ENCODE measurements at regions of chr2 and their contacts with region 1.

Region 1: DNA sequence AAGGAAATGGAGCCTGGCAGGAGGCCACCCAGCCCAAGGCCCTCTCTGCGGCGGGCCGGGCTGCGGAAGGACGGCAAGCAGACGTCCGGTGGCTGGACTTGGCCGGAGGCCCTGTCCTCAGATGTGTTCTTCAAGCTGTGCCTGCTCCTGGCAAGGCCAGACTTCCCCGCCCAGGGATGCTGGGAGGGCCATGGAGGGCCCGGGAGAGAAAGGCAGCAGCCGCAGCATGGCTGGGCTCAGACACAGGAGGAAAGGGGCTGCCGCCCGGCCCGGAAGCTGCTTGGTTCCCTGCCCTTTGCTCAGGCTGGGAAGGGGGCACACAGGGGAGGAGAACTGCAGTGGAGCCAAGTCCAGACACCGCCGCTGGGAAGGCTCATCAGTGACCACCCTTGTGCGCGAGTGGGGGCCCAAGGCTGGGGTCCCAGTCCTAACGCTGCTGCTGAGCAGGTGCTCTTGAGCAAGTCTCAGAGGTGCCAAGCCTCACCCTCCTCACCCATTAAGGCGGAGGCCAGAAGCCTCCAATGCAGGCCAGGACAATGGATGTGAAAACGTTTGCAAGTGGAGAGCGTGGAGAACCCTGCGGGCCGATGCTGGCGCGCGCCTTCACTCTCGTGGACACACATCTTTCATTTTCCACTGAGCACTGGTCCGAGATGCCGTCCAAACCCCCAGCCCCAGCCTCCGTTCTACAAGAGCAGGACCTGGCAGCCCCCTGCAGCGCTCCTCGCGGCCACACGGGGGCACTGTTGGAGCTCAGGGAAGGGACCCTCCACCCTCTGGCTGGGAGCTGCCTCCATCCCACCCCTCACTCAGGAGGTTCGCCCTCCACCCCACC is 7.9 kb downstream of the CROCC2 start:
- DNase-seq: peak; percentile 55
- ATAC-seq: peak; percentile 57
- H3K4me3 ChIP-seq: no peak overlapping the region
- H3K27ac ChIP-seq: peak overlapping the region; percentile 7
- H3K4me1 ChIP-seq: peaks cover 38% of the 10 kb centered on the region
- H3K27me3 ChIP-seq: no peaks in the 10 kb centered on the region
- CTCF ChIP-seq: peak; percentile 79
- POLR2A ChIP-seq: no peak
- RAD21 ChIP-seq: peak; percentile 71

Region 2: DNA sequence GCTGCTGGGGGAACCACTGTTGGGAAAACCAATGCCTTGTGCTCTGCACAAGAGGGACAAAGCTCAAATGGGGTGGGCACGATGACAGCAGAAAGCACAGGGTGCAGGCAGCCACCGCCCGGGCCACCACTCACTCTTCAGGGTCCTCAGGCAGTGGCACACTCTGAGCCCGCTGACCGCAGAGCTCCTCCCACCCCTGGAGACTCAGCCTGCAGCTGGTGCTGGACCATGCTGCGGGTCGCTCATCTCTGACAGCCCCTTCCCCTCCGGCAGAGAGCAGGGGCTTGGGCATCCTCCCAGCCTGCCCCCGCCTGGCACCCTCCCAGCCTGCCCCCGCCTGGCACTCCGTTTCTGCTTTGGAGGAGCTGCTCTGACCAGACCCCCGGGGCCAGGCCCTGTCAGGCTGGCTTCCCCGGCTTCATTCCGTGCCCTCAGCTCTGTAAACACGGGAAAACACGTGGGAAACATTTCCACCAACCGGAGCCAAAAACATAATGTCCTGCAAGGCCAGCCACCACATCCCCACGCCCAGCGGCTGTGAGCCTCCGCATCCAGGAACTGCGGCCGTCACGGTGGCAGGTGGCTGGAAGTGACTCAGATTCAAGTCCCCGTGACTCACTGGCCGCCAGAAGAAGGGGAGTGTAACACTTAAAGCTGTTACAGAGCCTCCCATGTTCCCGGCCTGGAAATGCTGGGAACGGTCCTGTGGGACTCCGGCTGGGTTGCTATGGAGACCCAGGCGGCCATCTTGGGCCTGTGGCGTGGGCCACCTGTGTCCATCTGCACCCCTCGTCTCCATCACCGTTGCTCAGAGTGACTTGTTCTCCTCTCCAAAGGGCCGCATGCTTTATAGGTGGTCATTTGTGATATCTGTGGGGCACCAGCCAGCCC is 77.6 kb after region 1 on chr2:
- CTCF ChIA-PET with region 1: no interaction called
- POLR2A ChIA-PET with region 1: no interaction called
- dilution Hi-C with region 1: no loop called
- in situ Hi-C with region 1: loop called (anchors 5 kb)
- intact Hi-C with region 1: no loop called
- DNase-seq: peak; percentile 97
- ATAC-seq: peak; percentile 79
- H3K4me3 ChIP-seq: no peak overlapping the region
- H3K27ac ChIP-seq: peak overlapping the region; percentile 35
- H3K4me1 ChIP-seq: peaks cover 32% of the 10 kb centered on the region
- H3K27me3 ChIP-seq: no peaks in the 10 kb centered on the region
- CTCF ChIP-seq: no peak
- POLR2A ChIP-seq: no peak
- RAD21 ChIP-seq: no peak

Region 3: DNA sequence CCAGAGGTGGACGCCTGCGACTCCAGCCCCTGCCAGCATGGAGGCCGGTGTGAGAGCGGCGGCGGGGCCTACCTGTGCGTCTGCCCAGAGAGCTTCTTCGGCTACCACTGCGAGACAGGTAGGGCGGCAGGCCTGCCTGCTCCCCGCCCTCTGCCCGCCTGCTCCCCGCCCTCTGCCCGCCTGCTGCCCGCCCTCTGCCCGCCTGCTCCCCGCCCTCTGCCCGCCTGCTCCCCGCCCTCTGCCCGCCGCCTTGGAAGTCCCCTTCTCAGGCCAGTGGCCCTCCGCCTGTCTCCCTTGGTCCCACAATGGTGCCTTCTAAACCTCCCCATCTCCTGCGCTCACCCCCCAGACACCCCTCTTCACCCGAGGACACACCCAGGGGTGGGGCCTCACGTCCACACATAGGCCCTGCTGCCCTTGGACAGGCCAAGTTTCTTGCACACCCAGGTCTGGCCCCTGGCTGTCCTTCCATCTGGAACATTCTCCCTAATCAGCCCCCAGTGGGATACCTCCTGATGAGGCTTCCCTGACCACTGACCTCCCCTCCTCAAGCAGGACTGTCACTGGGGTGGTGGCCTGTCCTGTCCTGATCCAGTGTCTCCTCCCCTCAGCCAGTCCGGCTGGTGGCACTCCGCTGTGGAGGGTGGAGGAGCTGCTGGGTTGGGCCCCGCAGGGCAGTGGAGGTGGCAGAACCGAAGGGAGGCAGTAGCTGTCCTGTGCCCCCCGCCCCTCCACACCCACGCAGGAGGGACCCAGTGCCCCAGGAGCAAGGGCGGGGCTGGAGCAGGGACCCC is 150.2 kb after region 1 on chr2:
- CTCF ChIA-PET with region 1: no interaction called
- POLR2A ChIA-PET with region 1: no interaction called
- dilution Hi-C with region 1: no loop called
- in situ Hi-C with region 1: no loop called
- intact Hi-C with region 1: loop called (anchors 5 kb)
- DNase-seq: no peak
- ATAC-seq: no peak
- H3K4me3 ChIP-seq: no peak overlapping the region
- H3K27ac ChIP-seq: no peak overlapping the region
- H3K4me1 ChIP-seq: no peaks in the 10 kb centered on the region
- H3K27me3 ChIP-seq: no peaks in the 10 kb centered on the region
- CTCF ChIP-seq: no peak
- POLR2A ChIP-seq: no peak
- RAD21 ChIP-seq: no peak

Region 4: DNA sequence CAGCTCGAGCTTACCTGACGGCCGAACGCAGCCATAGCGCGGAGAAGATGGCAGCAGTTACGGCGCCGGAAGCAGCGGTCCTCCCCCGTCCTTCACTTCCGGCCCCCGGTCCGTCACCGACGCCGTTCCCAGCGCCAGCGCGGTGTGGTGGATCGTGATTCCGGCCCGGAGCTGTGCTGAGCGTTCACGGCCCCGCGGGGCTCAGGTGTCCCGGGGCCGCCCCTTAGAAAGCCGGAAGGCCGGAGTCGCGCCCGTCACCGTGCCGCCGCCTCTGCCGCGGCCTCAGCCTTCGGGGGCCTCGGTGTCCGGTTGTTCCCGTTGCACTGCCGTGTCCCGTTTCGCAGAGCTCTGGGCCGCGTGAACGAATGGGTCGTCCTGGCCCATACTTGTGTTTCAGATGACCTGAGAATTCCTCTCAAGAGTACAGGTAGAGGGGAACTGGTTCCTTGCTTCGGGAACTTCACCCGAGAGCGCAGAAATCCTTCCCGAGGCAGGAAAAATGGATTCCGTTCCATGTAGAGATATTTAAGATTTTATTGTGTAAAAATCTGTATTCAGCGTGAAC is 188.3 kb after region 1 on chr2 and contains the start of gene MTERF4:
- CTCF ChIA-PET with region 1: no interaction called
- POLR2A ChIA-PET with region 1: no interaction called
- dilution Hi-C with region 1: no loop called
- in situ Hi-C with region 1: no loop called
- intact Hi-C with region 1: loop called (anchors 1 kb)
- DNase-seq: peak; percentile 76
- ATAC-seq: peak; percentile 98
- H3K4me3 ChIP-seq: peak within 1 kb of the TSS; percentile 87
- H3K27ac ChIP-seq: peak within 1 kb of the TSS; percentile 73
- H3K4me1 ChIP-seq: no peaks in the 10 kb centered on the region; the same call in 1 of the 2 replicates
- H3K27me3 ChIP-seq: no peaks in the 10 kb centered on the region
- CTCF ChIP-seq: no peak
- POLR2A ChIP-seq: no peak; the same call in none of the 2 replicates
- RAD21 ChIP-seq: peak; percentile 11; the same call in 1 of the 2 replicates
- total RNA-seq, gene MTERF4: 33.3 and 36.9 TPM in 2 replicates

Region 5: GRCh38 chr2:241217320-241218031 is 303.4 kb after region 1 on chr2:
- CTCF ChIA-PET with region 1: no interaction called
- POLR2A ChIA-PET with region 1: no interaction called
- dilution Hi-C with region 1: no loop called
- in situ Hi-C with region 1: no loop called
- intact Hi-C with region 1: loop called (anchors 5 kb)
- DNase-seq: peak; percentile 72
- ATAC-seq: peak; percentile 82
- H3K4me3 ChIP-seq: peak overlapping the region; percentile 49
- H3K27ac ChIP-seq: peak overlapping the region; percentile 26
- H3K4me1 ChIP-seq: peaks cover 4% of the 10 kb centered on the region; the same call in 1 of the 2 replicates
- H3K27me3 ChIP-seq: peaks cover 10% of the 10 kb centered on the region; the same call in 1 of the 2 replicates
- CTCF ChIP-seq: no peak
- POLR2A ChIP-seq: 0 out of 2 replicates have a peak, but pooled peaks have one; percentile 18
- RAD21 ChIP-seq: no peak